ENCODE measurements at regions of chr19 and their contacts with region 1.

Region 1: DNA sequence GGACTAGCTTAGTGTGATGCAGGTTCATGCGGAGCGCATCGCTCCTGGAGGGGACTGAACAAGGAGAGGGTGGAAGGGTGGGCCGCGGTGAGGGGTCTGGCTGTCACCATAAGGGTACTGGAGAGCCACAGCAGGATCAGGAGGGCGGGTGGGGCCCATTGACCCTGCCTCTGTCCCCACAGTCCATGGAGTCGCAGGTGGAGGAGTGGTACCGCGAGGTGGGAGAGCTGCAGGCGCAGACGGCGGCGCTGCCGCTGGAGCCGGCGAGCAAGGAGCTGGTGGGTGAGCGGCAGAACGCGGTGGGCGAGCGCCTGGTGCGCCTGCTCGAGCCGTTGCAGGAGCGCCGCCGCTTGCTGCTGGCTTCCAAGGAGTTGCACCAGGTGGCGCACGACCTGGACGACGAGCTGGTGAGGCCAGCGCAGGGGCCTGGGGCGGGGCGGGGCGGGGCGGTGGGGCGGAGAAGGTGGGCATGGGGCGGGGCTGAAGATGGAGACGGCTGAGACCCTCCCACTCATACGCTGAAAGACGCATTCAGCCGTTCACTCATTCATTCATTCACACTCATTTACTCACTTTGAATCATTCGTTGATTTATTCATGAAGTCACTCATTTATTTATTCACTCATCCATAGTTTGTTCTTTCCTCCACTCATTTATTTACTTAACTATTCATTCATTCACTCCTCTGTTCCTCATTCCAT is 27.5 kb upstream of the SHKBP1 start:
- DNase-seq: peak; percentile 96
- ATAC-seq: peak; percentile 93
- H3K4me3 Mint-ChIP-seq: peak overlapping the region; percentile 61
- H3K27ac Mint-ChIP-seq: no peak overlapping the region
- H3K4me1 Mint-ChIP-seq: peaks cover 8% of the 10 kb centered on the region
- H3K27me3 Mint-ChIP-seq: peaks cover 78% of the 10 kb centered on the region
- CTCF ChIP-seq: peak; percentile 41; the same call in 1 of the 2 replicates

Region 2: GRCh38 chr19:40489882-40490230 is 59.3 kb before region 1 on chr19:
- CTCF ChIA-PET with region 1: interaction called, 10 read pairs
- POLR2A ChIA-PET with region 1: no interaction called
- DNase-seq: no peak
- ATAC-seq: no peak
- H3K4me3 Mint-ChIP-seq: no peak overlapping the region
- H3K27ac Mint-ChIP-seq: no peak overlapping the region
- H3K4me1 Mint-ChIP-seq: peaks cover 5% of the 10 kb centered on the region
- H3K27me3 Mint-ChIP-seq: peaks cover 67% of the 10 kb centered on the region
- CTCF ChIP-seq: no peak

Region 3: GRCh38 chr19:40529093-40529954 is 19.8 kb before region 1 on chr19:
- CTCF ChIA-PET with region 1: interaction called, 18 read pairs
- POLR2A ChIA-PET with region 1: no interaction called
- DNase-seq: peak; percentile 93
- ATAC-seq: peak; percentile 57
- H3K4me3 Mint-ChIP-seq: peak overlapping the region; percentile 67
- H3K27ac Mint-ChIP-seq: peak overlapping the region; percentile 68; the same call in 1 of the 2 replicates
- H3K4me1 Mint-ChIP-seq: peaks cover 16% of the 10 kb centered on the region
- H3K27me3 Mint-ChIP-seq: peaks cover 41% of the 10 kb centered on the region
- CTCF ChIP-seq: peak; percentile 99

Region 4: GRCh38 chr19:40570313-40571004 is 21.3 kb after region 1 on chr19:
- CTCF ChIA-PET with region 1: interaction called, 35 read pairs
- POLR2A ChIA-PET with region 1: interaction called, 3 read pairs
- DNase-seq: peak; percentile 100
- ATAC-seq: peak; percentile 96
- H3K4me3 Mint-ChIP-seq: peak overlapping the region; percentile 75
- H3K27ac Mint-ChIP-seq: no peak overlapping the region; the same call in 1 of the 2 replicates
- H3K4me1 Mint-ChIP-seq: peaks cover 15% of the 10 kb centered on the region
- H3K27me3 Mint-ChIP-seq: peaks cover 78% of the 10 kb centered on the region
- CTCF ChIP-seq: no peak

Region 5: DNA sequence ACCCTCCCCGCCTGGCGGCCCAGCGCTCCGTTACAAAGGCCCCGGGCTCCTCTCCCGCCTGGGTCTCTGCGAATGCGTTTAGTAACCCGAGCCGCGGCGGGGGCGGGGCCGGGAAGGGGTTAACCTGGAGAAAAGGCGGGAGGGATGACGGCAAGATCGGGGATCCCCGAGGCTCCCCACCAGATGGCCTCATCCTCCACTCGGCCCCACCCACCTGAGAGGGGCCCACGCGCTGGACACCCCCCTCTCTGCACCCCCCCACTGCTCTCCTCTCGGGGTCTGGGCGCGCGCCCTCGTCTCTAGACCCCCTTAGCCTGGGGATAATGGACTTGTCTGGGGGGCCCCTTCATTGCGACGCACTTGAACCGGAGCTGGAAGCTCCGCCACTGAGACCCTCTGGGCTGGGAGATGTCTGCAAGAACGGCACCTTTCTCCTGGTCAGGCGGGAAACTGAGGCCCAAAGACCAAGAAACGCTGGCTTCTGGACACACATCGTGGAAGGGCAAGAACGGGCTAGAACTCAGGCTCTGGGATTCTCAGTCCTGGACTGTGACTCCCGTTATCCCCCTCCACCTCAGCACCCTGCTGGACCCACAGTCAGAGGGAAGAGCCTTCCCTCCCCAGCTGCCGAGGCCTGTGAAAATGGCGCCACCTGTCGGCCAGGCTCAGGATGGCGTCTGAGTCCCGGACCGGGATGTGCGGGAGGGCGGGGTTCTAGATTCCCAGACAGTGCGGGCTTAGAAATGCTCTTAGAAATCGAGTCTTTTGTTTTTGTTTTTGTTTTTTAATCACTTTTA is 49.2 kb after region 1 on chr19:
- CTCF ChIA-PET with region 1: interaction called, 71 read pairs
- POLR2A ChIA-PET with region 1: interaction called, 4 read pairs
- DNase-seq: peak; percentile 93
- ATAC-seq: peak; percentile 32
- H3K4me3 Mint-ChIP-seq: peak overlapping the region; percentile 76
- H3K27ac Mint-ChIP-seq: peak overlapping the region; percentile 82; the same call in 1 of the 2 replicates
- H3K4me1 Mint-ChIP-seq: peaks cover 44% of the 10 kb centered on the region
- H3K27me3 Mint-ChIP-seq: peaks cover 82% of the 10 kb centered on the region
- CTCF ChIP-seq: peak; percentile 99